A549 (cell line): ENCODE measurements at regions of chr4 and their contacts with region 1.

Region 1: DNA sequence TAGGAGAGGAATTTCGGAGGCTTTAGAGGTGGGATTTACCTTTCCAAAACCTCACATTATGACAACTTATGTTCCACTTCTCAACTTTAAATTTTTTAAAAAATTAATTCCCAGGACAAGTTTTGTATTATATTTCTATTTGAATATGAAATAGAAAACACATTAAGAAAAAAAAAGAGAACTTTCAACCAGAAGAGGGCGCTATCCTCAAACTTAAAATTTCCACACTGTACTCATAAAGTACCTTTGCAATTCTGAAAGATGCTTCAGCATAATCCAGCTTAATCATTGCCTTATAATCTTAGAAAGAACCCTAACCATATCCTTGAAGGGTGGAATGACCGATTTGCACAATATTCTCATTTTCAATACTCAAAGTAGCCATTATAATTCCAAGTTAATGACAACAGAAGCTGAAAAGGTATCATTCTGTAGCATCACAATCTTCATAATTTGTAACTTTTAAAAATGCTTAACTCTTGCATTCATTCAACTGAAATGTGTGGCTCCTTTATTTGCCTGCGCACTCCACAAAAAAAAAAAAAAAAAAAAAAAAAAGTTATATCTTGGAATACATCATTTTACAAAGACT is 158.0 kb downstream of the KCNIP4 start:
- DNase-seq: peak in 1 of 2 experiments; percentile 20
- ATAC-seq: peak in 1 of 2 experiments; percentile 50; a peak in 2 of 6 replicates
- H3K4me3 ChIP-seq: no peak overlapping the region
- H3K27ac ChIP-seq: no peak overlapping the region
- H3K4me1 ChIP-seq: no peaks in the 10 kb centered on the region
- CTCF ChIP-seq: peak; percentile 57
- EP300 ChIP-seq: no peak
- POLR2A ChIP-seq: no peak
- RAD21 ChIP-seq: peak; percentile 65

Region 2: GRCh38 chr4:21780158-21780557 is 10.4 kb before region 1 on chr4:
- CTCF ChIA-PET with region 1: interaction called, 10 read pairs
- POLR2A ChIA-PET with region 1: no interaction called
- DNase-seq: no peak
- ATAC-seq: no peak
- H3K4me3 ChIP-seq: no peak overlapping the region
- H3K27ac ChIP-seq: no peak overlapping the region
- H3K4me1 ChIP-seq: no peaks in the 10 kb centered on the region
- CTCF ChIP-seq: no peak
- EP300 ChIP-seq: no peak
- POLR2A ChIP-seq: no peak
- RAD21 ChIP-seq: no peak

Region 3: GRCh38 chr4:22356987-22357596 is 566.6 kb after region 1 on chr4:
- CTCF ChIA-PET with region 1: interaction called, 17 read pairs
- POLR2A ChIA-PET with region 1: no interaction called
- DNase-seq: peak in 1 of 2 experiments; percentile 13
- ATAC-seq: peak; percentile 43 to 69; a peak in 4 of 6 replicates
- H3K4me3 ChIP-seq: no peak overlapping the region
- H3K27ac ChIP-seq: no peak overlapping the region
- H3K4me1 ChIP-seq: no peaks in the 10 kb centered on the region
- CTCF ChIP-seq: no peak
- EP300 ChIP-seq: no peak
- POLR2A ChIP-seq: no peak
- RAD21 ChIP-seq: peak in 1 of 2 experiments; percentile 24; a peak in 1 of 5 replicates

Region 4: DNA sequence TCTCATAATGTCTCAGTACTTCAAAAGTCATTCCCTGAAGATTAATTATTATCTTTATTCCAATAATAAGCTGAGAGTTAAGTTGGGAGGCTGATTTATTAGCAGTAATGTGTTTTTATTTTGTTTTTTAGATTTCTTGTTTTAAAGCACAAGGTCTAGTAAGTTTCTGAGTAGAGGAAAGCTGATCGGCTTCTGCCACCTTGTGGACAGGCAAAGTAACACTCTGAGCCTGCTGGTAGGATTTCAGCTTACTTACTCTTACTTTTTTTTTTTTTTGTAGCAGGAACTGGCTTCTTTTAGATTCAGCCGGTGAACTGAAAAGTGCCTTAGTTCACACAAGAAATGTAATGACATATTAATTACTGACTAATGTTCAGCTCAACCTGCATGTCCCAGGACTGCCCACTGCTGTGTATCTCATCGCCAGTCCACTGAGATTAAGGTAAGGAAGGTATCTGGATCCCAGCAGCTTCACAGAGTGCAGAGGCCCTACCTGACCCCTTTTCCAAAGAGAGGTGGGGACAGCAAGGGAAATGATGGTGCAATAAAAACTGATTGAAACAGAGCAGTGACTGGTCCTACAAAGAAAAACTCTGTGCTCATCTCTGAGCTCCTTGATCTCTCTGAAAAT is 598.8 kb after region 1 on chr4:
- CTCF ChIA-PET with region 1: interaction called, 88 read pairs
- POLR2A ChIA-PET with region 1: no interaction called
- DNase-seq: peak; percentile 7 to 66
- ATAC-seq: peak; percentile 83 to 86
- H3K4me3 ChIP-seq: no peak overlapping the region
- H3K27ac ChIP-seq: no peak overlapping the region
- H3K4me1 ChIP-seq: peaks cover 10% of the 10 kb centered on the region; the same call in 2 of the 3 replicates
- CTCF ChIP-seq: peak; percentile 67
- EP300 ChIP-seq: no peak
- POLR2A ChIP-seq: no peak
- RAD21 ChIP-seq: peak; percentile 74 to 75